GM10248 (cell line): ENCODE measurements at regions of chr22 and their contacts with region 1.

Region 1: GRCh38 chr22:24482575-24482974 is 12.6 kb upstream of the UPB1 start:
- DNase-seq: no peak
- CTCF ChIP-seq: no peak

Region 2: GRCh38 chr22:24410110-24410856 is 72.3 kb before region 1 on chr22:
- CTCF ChIA-PET with region 1: no interaction called
- POLR2A ChIA-PET with region 1: no interaction called
- DNase-seq: no peak
- CTCF ChIP-seq: no peak

Region 3: DNA sequence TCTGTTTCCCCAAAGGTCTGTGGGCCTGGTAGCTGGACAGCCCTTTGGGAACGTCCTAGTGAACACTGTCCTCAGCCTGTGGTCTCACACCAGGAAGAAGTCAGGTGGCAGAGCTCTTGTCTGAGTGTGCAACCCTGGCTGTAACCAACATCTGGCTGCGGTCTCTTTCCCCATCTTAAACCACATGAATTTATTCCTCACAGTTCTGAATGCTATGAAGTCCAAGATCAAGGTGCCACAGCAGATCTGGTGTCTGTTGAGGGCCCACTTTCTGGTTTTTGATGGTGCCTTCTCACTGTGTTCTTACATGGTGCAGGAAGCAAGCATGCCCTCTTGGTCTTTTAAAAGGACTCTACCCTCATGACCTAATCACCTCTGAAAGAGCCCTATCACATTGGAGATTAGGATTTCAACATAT is 15.3 kb after region 1 on chr22:
- CTCF ChIA-PET with region 1: interaction called, 14 read pairs
- POLR2A ChIA-PET with region 1: interaction called, 3 read pairs
- DNase-seq: no peak
- CTCF ChIP-seq: no peak